ENCODE measurements at regions of chr15 and their contacts with region 1.

Region 1: DNA sequence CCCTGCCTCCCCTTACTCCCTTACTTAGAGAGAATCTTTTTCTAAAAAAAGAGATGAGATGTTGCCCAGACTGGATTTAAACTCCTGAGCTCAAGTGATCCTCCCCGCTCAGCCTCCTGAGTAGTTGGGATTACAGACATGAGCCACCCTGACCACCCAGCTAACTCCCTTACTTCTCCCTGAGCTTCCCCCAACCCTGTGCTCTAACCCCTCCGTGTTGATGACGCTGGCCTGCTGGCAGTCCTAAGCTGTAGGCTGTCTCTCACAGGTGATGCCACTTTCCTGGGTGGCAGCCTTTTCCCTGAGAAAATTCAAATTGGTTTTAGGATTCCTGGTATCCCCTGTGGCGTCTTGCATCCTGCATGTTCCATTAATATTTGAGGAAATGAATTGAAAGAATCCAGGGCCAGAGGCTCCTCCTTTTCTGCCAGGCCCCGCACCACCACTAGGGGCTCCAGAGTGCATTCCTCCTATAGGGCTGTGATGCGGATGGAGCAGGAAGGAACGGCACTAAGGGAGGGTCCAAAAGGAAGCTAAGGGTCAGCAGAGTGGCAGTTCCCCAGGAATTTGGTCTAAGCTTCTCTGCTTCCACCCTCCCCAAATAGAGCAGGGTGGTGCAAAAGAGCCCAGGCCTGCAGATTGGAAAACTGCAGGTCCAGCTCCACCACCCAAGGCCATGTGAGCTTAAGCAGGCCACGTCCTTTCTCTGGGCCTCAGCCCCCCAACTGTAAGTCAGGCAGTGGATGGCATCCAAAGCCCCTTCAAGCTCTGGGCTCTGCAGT is 101.1 kb downstream of the DAPK2 start:
- DNase-seq: peak; percentile 74
- H3K4me3 ChIP-seq: no peak overlapping the region
- H3K27ac ChIP-seq: no peak overlapping the region
- H3K4me1 ChIP-seq: peaks cover 0 to 5% (median 0%) of the 10 kb centered on the region in 4 donors
- H3K27me3 ChIP-seq: no peaks in the 10 kb centered on the region
- CTCF ChIP-seq: peak; percentile 58 to 89 (median 80)
- EP300 ChIP-seq: no peak
- POLR2A ChIP-seq: no peak

Region 2: DNA sequence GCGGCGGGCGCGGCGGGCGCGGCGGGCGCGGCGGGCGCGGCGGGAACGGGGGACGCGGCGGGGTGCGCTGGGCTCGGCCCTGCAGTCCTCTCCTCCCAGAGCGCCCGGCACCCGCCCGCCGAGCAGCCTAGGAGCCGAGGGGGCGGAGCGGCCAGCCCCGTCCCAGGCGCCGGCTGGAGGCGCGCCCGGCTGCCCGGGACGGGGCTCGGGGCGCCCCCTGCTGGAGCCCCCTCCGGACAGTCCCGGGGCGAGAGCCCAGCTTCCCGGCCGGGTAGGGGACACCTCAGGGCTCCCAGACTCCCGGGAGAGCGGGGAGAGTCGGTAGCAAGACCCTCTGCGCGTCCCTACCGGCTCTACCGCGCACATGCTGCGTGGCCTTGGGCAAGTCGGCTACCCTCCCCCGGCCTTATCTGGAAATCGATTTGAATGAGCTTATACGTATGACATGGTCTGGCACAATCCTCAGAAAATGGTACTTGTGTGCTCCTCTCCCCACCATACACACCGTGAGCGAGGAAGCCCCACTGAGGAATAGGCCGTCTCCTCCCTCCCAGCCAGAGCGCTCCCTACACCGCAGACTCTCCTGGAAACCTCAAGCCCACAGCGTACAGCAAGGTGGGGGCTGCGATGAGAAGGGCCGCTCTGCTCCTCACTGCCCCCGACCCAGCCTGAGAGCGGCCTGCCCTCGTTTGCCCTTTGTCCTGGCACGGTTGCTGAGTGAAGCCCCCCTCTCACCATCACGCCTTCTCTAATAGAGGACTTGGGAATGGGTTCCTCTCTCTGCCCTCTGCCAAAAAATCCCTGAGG is 101.4 kb after region 1 on chr15 and contains the start of gene DAPK2:
- intact Hi-C with region 1: loop called (anchors 2 kb)
- DNase-seq: peak; percentile 78
- H3K4me3 ChIP-seq: peak within 1 kb of the TSS; percentile 28 to 60 (median 52)
- H3K27ac ChIP-seq: peak within 1 kb of the TSS in 3 of 4 donors; percentile 2 to 47 (median 9)
- H3K4me1 ChIP-seq: peaks cover 0 to 19% (median 11%) of the 10 kb centered on the region in 4 donors
- H3K27me3 ChIP-seq: no peaks in the 10 kb centered on the region
- CTCF ChIP-seq: peak in 2 of 4 experiments; percentile 31 to 68
- EP300 ChIP-seq: no peak
- POLR2A ChIP-seq: no peak
- total RNA-seq, gene DAPK2: 2.1 to 5.5 (median 3.3) TPM

Measured in sigmoid colon (tissue), 7 donors.